ENCODE measurements at regions of chr17 and their contacts with region 1.

Region 1: DNA sequence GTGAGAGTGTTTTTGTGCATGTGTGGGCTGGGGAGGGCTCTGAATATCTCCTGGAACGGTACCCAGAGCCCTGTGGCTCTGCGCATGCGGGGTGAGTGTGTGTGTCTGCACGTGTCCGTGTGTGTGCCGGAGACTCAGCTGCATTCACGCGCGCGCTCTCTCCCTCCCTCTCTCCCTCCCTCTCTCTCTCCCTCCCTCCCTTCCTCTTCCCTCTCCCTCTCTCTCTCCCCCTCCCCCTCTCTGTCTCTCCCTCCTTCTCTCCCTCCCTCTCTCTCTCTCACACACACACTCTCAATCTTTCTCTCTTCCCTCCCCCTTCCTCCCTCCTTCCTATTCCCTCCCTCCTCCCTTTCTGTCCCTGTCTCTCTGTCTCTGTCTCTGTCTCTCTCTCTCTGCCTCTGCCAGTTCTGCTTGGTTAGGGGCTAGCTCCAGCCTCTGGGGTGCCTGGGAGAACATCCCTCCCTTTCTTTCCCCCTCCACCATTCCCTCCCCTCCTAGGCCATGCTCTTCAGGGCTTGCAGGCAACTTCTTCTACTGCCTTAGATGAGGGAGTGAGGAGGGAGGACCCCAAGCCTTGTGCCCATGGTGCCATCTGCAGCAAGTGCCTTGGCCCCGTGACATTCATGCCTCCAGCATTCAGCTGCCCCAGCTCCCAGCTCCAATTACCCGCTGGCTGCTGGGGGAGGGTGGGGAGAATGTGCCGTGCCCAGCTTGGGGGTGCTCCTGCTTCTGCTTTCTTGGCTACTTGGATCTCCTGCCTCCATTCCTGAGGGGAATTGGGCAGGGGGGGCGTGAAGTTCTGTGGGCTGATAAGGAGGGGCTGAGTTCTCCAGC is 6.4 kb downstream of the THRA start:
- DNase-seq: peak; percentile 84
- ATAC-seq: peak; percentile 83
- H3K4me3 Mint-ChIP-seq: peak overlapping the region; percentile 81
- H3K27ac Mint-ChIP-seq: peak overlapping the region; percentile 89
- H3K4me1 Mint-ChIP-seq: peaks cover 33% of the 10 kb centered on the region
- H3K27me3 Mint-ChIP-seq: peaks cover 1% of the 10 kb centered on the region

Region 2: GRCh38 chr17:40056379-40057010 is 12.6 kb before region 1 on chr17:
- CTCF ChIA-PET with region 1: interaction called, 85 read pairs
- DNase-seq: no peak
- ATAC-seq: no peak
- H3K4me3 Mint-ChIP-seq: no peak overlapping the region
- H3K27ac Mint-ChIP-seq: no peak overlapping the region
- H3K4me1 Mint-ChIP-seq: peaks cover 23% of the 10 kb centered on the region
- H3K27me3 Mint-ChIP-seq: peaks cover 12% of the 10 kb centered on the region